GM10248 (cell line): ENCODE measurements at regions of chr1 and their contacts with region 1.

Region 1: GRCh38 chr1:18597160-18598042 is 33.2 kb upstream of the PAX7 start:
- DNase-seq: peak; percentile 57
- CTCF ChIP-seq: peak; percentile 85

Region 2: DNA sequence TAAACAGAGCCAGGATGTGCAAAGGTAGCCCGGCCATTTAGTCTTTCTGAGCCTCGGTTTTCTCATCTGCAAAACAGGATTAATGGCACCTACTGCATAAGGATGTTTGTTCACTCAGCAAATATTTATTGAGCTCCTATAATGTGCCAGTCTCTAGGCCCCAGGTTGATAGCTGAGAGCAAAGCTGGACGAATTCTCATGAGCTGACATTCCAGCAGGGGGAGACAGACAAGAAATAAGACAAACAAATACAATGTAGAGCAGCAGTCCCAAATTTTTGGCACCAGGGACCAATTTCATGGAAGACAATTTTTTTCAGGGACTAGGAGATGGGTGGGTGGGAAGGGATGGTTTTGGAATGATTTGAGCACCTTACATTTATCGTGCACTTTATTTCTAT is 41.0 kb before region 1 on chr1:
- CTCF ChIA-PET with region 1: no interaction called
- POLR2A ChIA-PET with region 1: no interaction called
- DNase-seq: no peak
- CTCF ChIP-seq: peak; percentile 34

Region 3: DNA sequence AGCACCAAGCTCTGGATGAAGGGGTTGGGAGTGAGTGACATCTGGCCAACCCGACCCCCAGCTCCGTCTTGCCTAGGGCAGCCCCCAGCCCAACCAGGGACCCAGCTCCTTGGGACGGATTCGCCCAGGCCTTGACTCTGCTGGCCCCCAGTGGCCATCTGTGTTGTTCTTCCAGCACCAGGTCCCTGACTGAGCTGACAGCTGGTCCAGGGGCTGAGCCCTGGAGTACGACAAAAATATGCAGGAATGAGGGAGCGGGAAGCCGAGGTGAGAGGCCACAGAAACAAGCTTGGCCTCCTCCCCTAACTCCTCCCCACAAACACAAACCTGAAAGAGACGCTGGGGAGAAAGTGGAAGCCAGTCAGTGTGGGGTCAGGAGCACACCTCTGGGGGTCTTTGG is 21.8 kb before region 1 on chr1:
- CTCF ChIA-PET with region 1: interaction called, 47 read pairs
- POLR2A ChIA-PET with region 1: no interaction called
- DNase-seq: peak; percentile 50
- CTCF ChIP-seq: peak; percentile 93

Region 4: DNA sequence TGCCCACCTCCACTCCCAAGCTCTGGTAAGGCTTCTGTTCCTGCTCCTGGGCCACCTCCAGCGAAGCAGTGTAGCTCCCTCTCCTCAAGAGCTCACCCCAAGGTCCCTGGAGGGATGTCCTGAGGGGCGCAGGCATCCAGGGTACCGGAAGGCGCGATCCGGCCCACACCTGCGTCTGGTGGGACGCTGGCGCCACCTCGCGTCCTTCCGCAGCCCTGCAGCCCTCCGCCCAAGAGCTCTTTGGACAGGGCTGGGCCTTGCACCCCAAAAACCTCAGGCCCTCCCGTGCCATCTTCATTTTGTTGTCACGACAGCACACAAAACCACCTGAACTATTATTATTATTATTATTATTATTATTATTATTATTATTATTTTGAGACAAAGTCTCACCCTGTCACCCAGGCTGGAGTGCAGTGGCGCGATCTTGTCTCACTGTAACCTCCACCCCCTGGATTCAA is 16.0 kb before region 1 on chr1:
- CTCF ChIA-PET with region 1: interaction called, 47 read pairs
- POLR2A ChIA-PET with region 1: no interaction called
- DNase-seq: peak; percentile 79
- CTCF ChIP-seq: peak; percentile 70

Region 5: DNA sequence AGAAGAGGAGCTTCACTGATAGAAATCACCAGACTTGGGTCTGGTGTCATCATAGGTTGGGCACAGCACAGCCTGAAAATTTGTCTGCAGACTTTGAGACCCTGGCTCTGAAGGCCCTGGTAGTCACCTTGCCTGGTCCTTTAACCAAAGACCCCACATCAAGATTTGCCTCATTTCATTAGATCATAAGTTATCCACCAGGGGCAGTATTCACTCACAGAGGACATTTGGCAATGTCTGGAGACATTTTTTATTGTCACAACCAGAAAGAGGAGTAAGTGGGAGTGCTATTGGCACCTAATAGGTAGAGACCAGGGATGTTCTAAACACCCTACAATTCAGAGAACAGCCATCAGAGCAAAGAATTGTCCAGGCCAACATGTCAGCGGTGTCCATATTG is 11.1 kb after region 1 on chr1:
- CTCF ChIA-PET with region 1: interaction called, 14 read pairs
- POLR2A ChIA-PET with region 1: no interaction called
- DNase-seq: no peak
- CTCF ChIP-seq: no peak

Region 6: GRCh38 chr1:18614069-18614735 is 16.8 kb after region 1 on chr1:
- CTCF ChIA-PET with region 1: interaction called, 14 read pairs
- POLR2A ChIA-PET with region 1: no interaction called
- DNase-seq: no peak
- CTCF ChIP-seq: no peak

Region 7: GRCh38 chr1:18820791-18821641 is 223.6 kb after region 1 on chr1:
- CTCF ChIA-PET with region 1: interaction called, 71 read pairs
- POLR2A ChIA-PET with region 1: no interaction called
- DNase-seq: peak; percentile 85
- CTCF ChIP-seq: peak; percentile 81

Region 8: GRCh38 chr1:18875107-18875795 is 277.9 kb after region 1 on chr1:
- CTCF ChIA-PET with region 1: interaction called, 24 read pairs
- POLR2A ChIA-PET with region 1: no interaction called
- DNase-seq: peak; percentile 84
- CTCF ChIP-seq: peak; percentile 59